ENCODE measurements at regions of chr14 and their contacts with region 1.

Region 1: DNA sequence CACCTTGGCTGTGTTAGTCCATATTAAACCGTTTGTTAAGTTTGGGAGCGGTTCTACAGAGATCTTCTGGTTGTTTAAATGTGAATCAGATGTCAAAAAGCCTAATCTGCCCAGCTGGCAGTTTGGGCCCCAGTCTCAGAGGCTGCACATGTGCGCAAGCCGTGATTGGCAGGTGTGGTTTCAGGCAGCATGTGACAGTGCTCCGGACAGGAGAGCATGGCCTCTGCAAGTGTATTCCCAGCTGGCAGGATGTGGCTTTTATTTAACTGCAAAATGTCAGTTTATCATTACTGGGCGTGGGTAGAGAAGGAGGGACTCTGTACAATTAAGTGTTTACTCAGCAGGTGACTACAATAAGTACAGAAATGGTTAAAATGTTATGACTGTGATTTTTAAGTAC is 77.5 kb downstream of the PELI2 start:
- DNase-seq: peak; percentile 31
- H3K4me3 ChIP-seq: no peak overlapping the region
- H3K27ac ChIP-seq: no peak overlapping the region
- H3K4me1 ChIP-seq: peaks cover 19% of the 10 kb centered on the region
- H3K27me3 ChIP-seq: no peaks in the 10 kb centered on the region
- CTCF ChIP-seq: no peak
- POLR2A ChIP-seq: no peak

Region 2: GRCh38 chr14:55957950-55958349 is 237.8 kb before region 1 on chr14:
- CTCF ChIA-PET with region 1: no interaction called
- POLR2A ChIA-PET with region 1: no interaction called
- dilution Hi-C with region 1: no loop called
- intact Hi-C with region 1: no loop called
- DNase-seq: no peak
- H3K4me3 ChIP-seq: no peak overlapping the region
- H3K27ac ChIP-seq: no peak overlapping the region
- H3K4me1 ChIP-seq: no peaks in the 10 kb centered on the region
- H3K27me3 ChIP-seq: peaks cover 9 to 11% of the 10 kb centered on the region in 2 experiments
- CTCF ChIP-seq: no peak
- POLR2A ChIP-seq: no peak

Region 3: GRCh38 chr14:56333359-56334292 is 137.9 kb after region 1 on chr14:
- CTCF ChIA-PET with region 1: no interaction called
- POLR2A ChIA-PET with region 1: no interaction called
- dilution Hi-C with region 1: no loop called
- intact Hi-C with region 1: loop called (anchors 2 kb)
- DNase-seq: peak; percentile 91
- H3K4me3 ChIP-seq: no peak overlapping the region
- H3K27ac ChIP-seq: peak overlapping the region; percentile 99
- H3K4me1 ChIP-seq: peaks cover 25% of the 10 kb centered on the region
- H3K27me3 ChIP-seq: no peaks in the 10 kb centered on the region
- CTCF ChIP-seq: no peak
- POLR2A ChIP-seq: peak; percentile 36

Measured in endothelial cell of umbilical vein (primary cell).